Activated CD4-positive, alpha-beta T cell treated with anti-CD3 and anti-CD28 coated beads for 36 hours (primary cell): ENCODE measurements at regions of chr7 and their contacts with region 1.

Region 1: DNA sequence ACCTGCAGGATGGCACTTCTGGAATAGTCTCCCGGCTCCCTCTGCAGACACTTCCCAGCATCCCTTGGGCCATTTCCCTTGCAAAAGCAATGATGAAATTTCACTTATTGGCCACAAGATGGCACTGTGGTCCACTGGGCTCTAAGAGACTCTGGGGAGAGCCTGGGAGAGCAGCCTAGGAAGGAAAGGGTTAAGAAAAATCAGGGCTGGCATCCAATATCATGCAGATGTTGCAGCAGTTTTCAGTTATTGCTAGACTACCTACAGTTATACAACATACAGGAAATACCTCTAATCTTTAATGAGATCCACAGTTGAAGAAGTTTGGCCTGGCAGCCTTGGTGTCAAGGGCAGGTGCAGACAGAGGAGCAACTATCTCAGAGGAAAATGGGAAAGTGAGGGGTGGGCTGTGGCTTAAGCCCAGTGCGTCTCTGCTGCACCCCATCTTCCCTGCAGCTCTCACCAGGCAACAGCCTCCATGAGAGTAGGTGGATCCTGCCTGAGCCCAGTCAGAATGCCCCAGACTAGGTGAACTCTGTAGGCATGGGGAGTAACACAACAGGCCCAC is 100.2 kb upstream of the PRSS58 start:
- DNase-seq: peak; percentile 57
- ATAC-seq: peak; percentile 80
- H3K4me3 Mint-ChIP-seq: no peak overlapping the region
- H3K27ac Mint-ChIP-seq: no peak overlapping the region
- H3K4me1 Mint-ChIP-seq: peaks cover 33% of the 10 kb centered on the region
- H3K27me3 Mint-ChIP-seq: peaks cover 4% of the 10 kb centered on the region

Region 2: GRCh38 chr7:142053988-142054387 is 304.0 kb before region 1 on chr7:
- CTCF ChIA-PET with region 1: no interaction called
- POLR2A ChIA-PET with region 1: no interaction called
- intact Hi-C with region 1: loop called in 1 of 2 experiments (anchors 5 kb)
- DNase-seq: no peak
- ATAC-seq: no peak
- H3K4me3 Mint-ChIP-seq: no peak overlapping the region
- H3K27ac Mint-ChIP-seq: no peak overlapping the region
- H3K4me1 Mint-ChIP-seq: no peaks in the 10 kb centered on the region
- H3K27me3 Mint-ChIP-seq: peaks cover 5% of the 10 kb centered on the region

Region 3: GRCh38 chr7:142385491-142386340 is 27.7 kb after region 1 on chr7:
- CTCF ChIA-PET with region 1: interaction called, 28 read pairs
- POLR2A ChIA-PET with region 1: no interaction called
- intact Hi-C with region 1: loop called in 1 of 2 experiments (anchors 1 kb)
- DNase-seq: peak; percentile 72
- ATAC-seq: peak; percentile 50
- H3K4me3 Mint-ChIP-seq: no peak overlapping the region
- H3K27ac Mint-ChIP-seq: peak overlapping the region; percentile 67
- H3K4me1 Mint-ChIP-seq: peaks cover 27% of the 10 kb centered on the region
- H3K27me3 Mint-ChIP-seq: no peaks in the 10 kb centered on the region

Region 4: DNA sequence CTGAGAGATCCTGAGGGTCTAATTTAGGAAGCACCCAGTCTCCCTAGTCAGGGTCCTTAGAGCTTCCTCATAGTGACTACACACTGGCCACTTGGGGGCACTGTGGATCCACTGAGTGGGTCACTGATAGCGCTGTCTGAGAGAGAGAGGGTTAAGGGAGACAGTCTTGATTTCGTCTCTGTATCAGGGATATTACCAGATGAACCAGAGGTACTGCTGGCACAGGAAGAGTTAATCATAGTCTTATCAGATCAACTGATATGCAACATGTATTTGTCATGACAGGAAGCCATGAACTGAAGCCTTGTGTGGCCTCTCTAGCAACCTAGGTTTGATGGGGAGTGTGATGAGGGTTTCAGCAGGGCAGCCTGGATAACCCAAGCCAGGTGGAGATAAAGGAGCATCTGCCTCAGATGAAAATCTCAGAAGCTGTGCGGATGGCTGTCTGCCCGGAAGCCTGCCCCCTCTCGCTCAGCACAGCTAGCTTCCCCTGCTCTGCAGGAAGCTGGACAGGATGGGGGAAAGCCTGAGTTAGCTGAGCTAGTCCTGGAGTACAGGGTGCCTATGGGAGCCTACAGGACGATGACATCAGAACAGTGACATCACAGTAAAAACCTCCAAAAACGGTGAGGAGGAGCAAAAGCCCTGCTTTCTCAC is 177.2 kb after region 1 on chr7:
- CTCF ChIA-PET with region 1: no interaction called
- POLR2A ChIA-PET with region 1: no interaction called
- intact Hi-C with region 1: no loop called
- DNase-seq: peak; percentile 90
- ATAC-seq: peak; percentile 87
- H3K4me3 Mint-ChIP-seq: peak overlapping the region; percentile 63
- H3K27ac Mint-ChIP-seq: peak overlapping the region; percentile 77
- H3K4me1 Mint-ChIP-seq: peaks cover 30% of the 10 kb centered on the region
- H3K27me3 Mint-ChIP-seq: no peaks in the 10 kb centered on the region